IMR-90 (cell line): ENCODE measurements at regions of chr2 and their contacts with region 1.

Region 1: GRCh38 chr2:42001711-42002201 is 46.1 kb upstream of the PKDCC start:
- DNase-seq: no peak
- ATAC-seq: no peak
- H3K4me3 ChIP-seq: no peak overlapping the region
- H3K27ac ChIP-seq: no peak overlapping the region
- H3K4me1 ChIP-seq: no peaks in the 10 kb centered on the region
- H3K27me3 ChIP-seq: peaks cover 35% of the 10 kb centered on the region
- CTCF ChIP-seq: no peak
- POLR2A ChIP-seq: no peak
- RAD21 ChIP-seq: no peak

Region 2: GRCh38 chr2:41972819-41973218 is 28.9 kb before region 1 on chr2:
- CTCF ChIA-PET with region 1: no interaction called
- POLR2A ChIA-PET with region 1: no interaction called
- dilution Hi-C with region 1: no loop called
- in situ Hi-C with region 1: no loop called
- intact Hi-C with region 1: loop called (anchors 1 kb)
- DNase-seq: no peak
- ATAC-seq: no peak
- H3K4me3 ChIP-seq: no peak overlapping the region
- H3K27ac ChIP-seq: no peak overlapping the region
- H3K4me1 ChIP-seq: no peaks in the 10 kb centered on the region; the same call in 1 of the 2 replicates
- H3K27me3 ChIP-seq: peaks cover 18% of the 10 kb centered on the region
- CTCF ChIP-seq: no peak
- POLR2A ChIP-seq: no peak
- RAD21 ChIP-seq: no peak